ENCODE measurements at regions of chr17 and their contacts with region 1.

Region 1: DNA sequence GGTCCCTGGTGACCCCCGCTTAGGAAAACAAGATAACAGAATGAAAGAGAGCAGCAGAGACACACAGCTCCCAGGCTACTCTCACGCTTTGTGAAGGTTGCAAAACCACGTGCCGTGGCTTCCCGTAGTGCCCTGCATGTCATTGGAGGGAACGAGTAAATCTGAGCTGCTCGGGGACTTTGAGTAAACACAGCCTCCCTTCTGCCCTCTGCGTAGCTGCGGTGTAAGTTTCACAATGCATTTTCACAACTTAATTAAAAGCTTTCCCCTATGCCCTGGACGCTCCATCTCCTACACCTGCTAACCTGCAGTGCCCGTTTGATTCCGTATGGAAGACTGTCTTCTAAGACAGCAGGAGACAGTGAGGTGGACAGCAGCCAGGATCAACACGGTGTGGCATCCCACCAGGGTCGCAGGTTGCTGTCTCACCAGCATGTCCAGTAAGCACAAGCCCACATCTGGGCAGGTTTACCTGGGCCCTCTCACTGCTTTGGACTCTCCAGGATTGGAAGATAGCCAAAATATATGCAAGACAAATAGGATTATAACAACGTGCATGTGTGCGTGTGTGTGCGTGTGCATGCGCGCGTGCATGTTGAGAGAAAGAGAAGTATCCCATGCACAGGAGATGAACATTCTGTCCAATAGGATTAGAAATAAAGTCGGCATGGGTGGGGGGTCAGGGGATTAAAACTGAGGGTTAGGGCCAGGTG is 116.4 kb upstream of the RCVRN start:
- DNase-seq: peak in 3 of 5 donors; percentile 50 to 75 (median 54)
- ATAC-seq: peak in 3 of 4 donors; percentile 23 to 52 (median 32)
- H3K4me3 ChIP-seq: no peak overlapping the region
- H3K27ac ChIP-seq: peak overlapping the region in 1 of 12 donors; percentile 42
- H3K4me1 ChIP-seq: peaks cover 0 to 86% (median 17%) of the 10 kb centered on the region in 12 donors
- H3K27me3 ChIP-seq: no peaks in the 10 kb centered on the region
- CTCF ChIP-seq: no peak
- POLR2A ChIP-seq: no peak

Region 2: GRCh38 chr17:9999919-10000695 is 21.3 kb before region 1 on chr17:
- intact Hi-C with region 1: loop called in 1 of 10 experiments (anchors 2 kb)
- DNase-seq: no peak
- ATAC-seq: no peak
- H3K4me3 ChIP-seq: no peak overlapping the region
- H3K27ac ChIP-seq: no peak overlapping the region
- H3K4me1 ChIP-seq: peaks cover 0 to 30% (median 3%) of the 10 kb centered on the region in 12 donors
- H3K27me3 ChIP-seq: no peaks in the 10 kb centered on the region
- CTCF ChIP-seq: no peak
- POLR2A ChIP-seq: no peak